SK-N-SH (cell line): ENCODE measurements at regions of chr4 and their contacts with region 1.

Region 1: DNA sequence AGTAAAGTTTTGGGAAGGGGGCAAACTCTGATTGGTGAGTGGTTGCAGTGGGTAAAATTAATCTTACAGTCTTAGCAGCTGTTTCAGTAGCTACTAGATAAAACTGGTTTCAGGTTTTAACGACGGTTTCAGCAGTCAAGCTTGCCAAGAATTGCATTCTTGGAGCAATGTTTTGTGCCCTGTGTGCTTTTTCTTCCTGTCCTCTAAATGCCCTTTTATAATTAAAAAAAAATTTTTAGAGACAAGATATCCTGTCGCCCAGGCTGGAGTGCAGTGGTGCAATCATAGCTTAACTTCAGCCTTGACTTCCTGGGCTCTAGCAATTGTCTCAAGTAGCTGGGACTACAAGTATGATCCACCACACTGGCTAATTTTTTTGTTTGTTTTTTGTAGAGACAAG is 6.3 kb upstream of the PPEF2 start:
- DNase-seq: no peak
- H3K4me3 ChIP-seq: no peak overlapping the region
- H3K27ac ChIP-seq: no peak overlapping the region
- H3K4me1 ChIP-seq: no peaks in the 10 kb centered on the region
- H3K27me3 ChIP-seq: no peaks in the 10 kb centered on the region
- CTCF ChIP-seq: no peak
- EP300 ChIP-seq: no peak
- RAD21 ChIP-seq: no peak

Region 2: GRCh38 chr4:75895744-75896314 is 12.7 kb before region 1 on chr4:
- CTCF ChIA-PET with region 1: interaction called, 13 read pairs
- POLR2A ChIA-PET with region 1: no interaction called
- DNase-seq: peak; percentile 50
- H3K4me3 ChIP-seq: no peak overlapping the region
- H3K27ac ChIP-seq: no peak overlapping the region
- H3K4me1 ChIP-seq: no peaks in the 10 kb centered on the region
- H3K27me3 ChIP-seq: peaks cover 1% of the 10 kb centered on the region; the same call in 1 of the 2 replicates
- CTCF ChIP-seq: peak; percentile 77
- EP300 ChIP-seq: no peak
- RAD21 ChIP-seq: peak; percentile 49

Region 3: DNA sequence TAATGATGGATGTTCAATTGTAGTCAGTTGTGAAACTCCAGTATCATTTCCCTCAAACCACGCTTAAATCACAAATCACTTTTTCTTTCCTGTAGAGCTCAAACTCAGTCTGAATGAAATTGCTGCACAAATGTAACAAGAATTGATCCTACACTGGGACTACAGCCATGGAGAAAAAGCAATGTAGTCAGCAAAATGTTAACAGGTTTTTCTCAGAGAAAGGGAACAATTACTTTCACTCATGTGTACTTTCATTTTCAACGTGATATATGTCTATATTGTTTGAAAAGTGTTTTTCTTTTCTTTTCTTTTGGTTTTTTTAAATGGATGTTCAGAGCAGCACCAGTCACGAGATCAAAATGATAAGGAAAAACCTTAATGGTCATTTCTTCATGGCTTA is 59.5 kb after region 1 on chr4:
- CTCF ChIA-PET with region 1: no interaction called
- POLR2A ChIA-PET with region 1: no interaction called
- DNase-seq: no peak
- H3K4me3 ChIP-seq: no peak overlapping the region
- H3K27ac ChIP-seq: no peak overlapping the region
- H3K4me1 ChIP-seq: no peaks in the 10 kb centered on the region
- H3K27me3 ChIP-seq: no peaks in the 10 kb centered on the region
- CTCF ChIP-seq: no peak
- EP300 ChIP-seq: no peak
- RAD21 ChIP-seq: no peak